B cell (primary cell): ENCODE measurements at regions of chr12 and their contacts with region 1.

Region 1: GRCh38 chr12:108618079-108618952 is 15.4 kb downstream of the SELPLG start:
- DNase-seq: peak; percentile 88
- ATAC-seq: peak; percentile 35
- H3K4me3 ChIP-seq: no peak overlapping the region
- H3K4me3 Mint-ChIP-seq: no peak overlapping the region
- H3K27ac ChIP-seq: peak overlapping the region; percentile 80 to 93
- H3K27ac Mint-ChIP-seq: peak overlapping the region; percentile 98
- H3K4me1 ChIP-seq: peaks cover 41 to 49% of the 10 kb centered on the region in 2 donors
- H3K4me1 Mint-ChIP-seq: peaks cover 69% of the 10 kb centered on the region
- H3K27me3 ChIP-seq: no peaks in the 10 kb centered on the region
- H3K27me3 Mint-ChIP-seq: no peaks in the 10 kb centered on the region
- CTCF ChIP-seq: peak; percentile 98

Region 2: DNA sequence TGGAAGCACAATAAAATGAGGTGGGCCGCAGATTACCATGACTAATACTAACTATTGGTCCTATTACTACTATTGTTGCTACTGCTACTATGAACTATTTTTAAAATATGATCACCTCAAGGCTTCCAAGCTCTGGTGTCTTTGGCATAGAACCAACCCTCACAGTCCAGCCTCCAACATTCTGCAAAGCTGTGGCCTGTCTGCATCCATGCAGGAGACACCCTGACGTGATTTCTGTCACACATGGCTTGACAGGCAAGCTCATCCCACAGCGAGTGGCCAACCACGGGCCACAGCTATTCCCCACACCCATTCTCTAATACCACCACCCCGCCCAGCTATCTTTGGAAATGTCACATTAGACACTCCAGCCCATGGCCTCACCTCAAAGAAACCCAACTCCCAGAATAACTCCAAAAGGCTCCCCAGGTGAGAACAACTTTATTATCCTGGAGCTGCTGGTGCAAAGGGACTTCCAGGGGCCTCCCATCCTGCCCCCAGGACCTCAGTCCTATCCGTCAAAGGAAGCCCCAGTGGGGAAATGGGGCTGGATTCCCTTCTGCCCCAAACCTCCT is 41.6 kb before region 1 on chr12:
- CTCF ChIA-PET with region 1: interaction called, 424 read pairs
- POLR2A ChIA-PET with region 1: interaction called, 9 read pairs
- intact Hi-C with region 1: no loop called
- DNase-seq: no peak
- ATAC-seq: no peak
- H3K4me3 ChIP-seq: no peak overlapping the region
- H3K4me3 Mint-ChIP-seq: no peak overlapping the region
- H3K27ac ChIP-seq: no peak overlapping the region
- H3K27ac Mint-ChIP-seq: no peak overlapping the region
- H3K4me1 ChIP-seq: peaks cover 21 to 27% of the 10 kb centered on the region in 2 donors
- H3K4me1 Mint-ChIP-seq: peaks cover 51% of the 10 kb centered on the region
- H3K27me3 ChIP-seq: no peaks in the 10 kb centered on the region
- H3K27me3 Mint-ChIP-seq: no peaks in the 10 kb centered on the region
- CTCF ChIP-seq: no peak

Region 3: GRCh38 chr12:108633534-108634248 is 15.4 kb after region 1 on chr12 and contains the start of gene SELPLG:
- CTCF ChIA-PET with region 1: interaction called, 431 read pairs
- POLR2A ChIA-PET with region 1: interaction called, 133 read pairs
- intact Hi-C with region 1: loop called (anchors 1 kb)
- DNase-seq: peak; percentile 98
- ATAC-seq: peak; percentile 75
- H3K4me3 ChIP-seq: peak within 1 kb of the TSS; percentile 62 to 87 (median 78)
- H3K4me3 Mint-ChIP-seq: peak within 1 kb of the TSS; percentile 99
- H3K27ac ChIP-seq: peak within 1 kb of the TSS; percentile 92 to 95
- H3K27ac Mint-ChIP-seq: peak within 1 kb of the TSS; percentile 100
- H3K4me1 ChIP-seq: peaks cover 78 to 88% of the 10 kb centered on the region in 2 donors
- H3K4me1 Mint-ChIP-seq: peaks cover 89% of the 10 kb centered on the region
- H3K27me3 ChIP-seq: no peaks in the 10 kb centered on the region
- H3K27me3 Mint-ChIP-seq: no peaks in the 10 kb centered on the region
- CTCF ChIP-seq: peak; percentile 41
- total RNA-seq, gene SELPLG: 6.1 and 6.2 TPM in 2 replicates

Region 4: DNA sequence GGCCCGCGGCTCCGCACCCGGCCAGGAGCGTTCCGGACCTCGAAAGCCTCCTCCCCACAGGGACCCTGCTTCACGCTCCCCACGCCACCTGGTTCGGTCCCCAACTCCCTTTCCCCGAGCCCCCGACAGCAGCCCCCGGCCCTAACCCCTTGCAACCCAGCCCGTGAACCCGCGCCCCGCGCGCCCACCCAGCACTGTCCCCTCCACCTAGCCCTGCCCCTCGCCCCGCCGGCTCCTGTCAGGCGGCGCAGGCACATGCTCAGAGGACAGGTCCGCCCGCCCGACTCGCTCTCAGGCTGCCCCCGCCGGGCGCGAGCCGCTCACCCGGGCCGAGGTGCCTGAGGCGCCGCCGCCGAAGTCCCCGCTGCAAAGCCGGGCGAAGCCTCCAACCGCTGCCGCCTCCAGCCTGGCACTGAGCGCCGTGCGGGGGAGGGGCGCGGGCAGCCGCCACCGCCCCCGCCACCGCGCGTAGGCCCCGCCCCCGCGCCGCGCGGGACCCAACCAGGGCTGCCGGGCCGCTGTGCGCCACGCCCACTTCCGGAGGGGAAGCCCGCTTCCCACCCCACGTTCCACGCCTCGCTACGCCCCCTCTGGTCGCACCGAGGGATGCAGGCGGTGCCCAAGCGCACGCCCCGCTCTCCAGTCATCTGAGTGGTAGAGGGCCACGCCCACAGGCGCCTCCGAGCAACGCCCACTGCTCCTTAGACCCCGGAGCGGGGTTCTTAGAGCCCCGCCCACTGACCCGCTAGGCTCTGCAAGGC is 113.0 kb after region 1 on chr12 and contains the start of gene CORO1C:
- CTCF ChIA-PET with region 1: interaction called, 5 read pairs
- POLR2A ChIA-PET with region 1: no interaction called
- intact Hi-C with region 1: loop called (anchors 5 kb)
- DNase-seq: peak; percentile 97
- ATAC-seq: peak; percentile 73
- H3K4me3 ChIP-seq: peak within 1 kb of the TSS; percentile 70 to 92 (median 86)
- H3K4me3 Mint-ChIP-seq: peak within 1 kb of the TSS; percentile 99
- H3K27ac ChIP-seq: peak within 1 kb of the TSS; percentile 80 to 92
- H3K27ac Mint-ChIP-seq: peak within 1 kb of the TSS; percentile 98
- H3K4me1 ChIP-seq: peaks cover 11 to 16% of the 10 kb centered on the region in 2 donors
- H3K4me1 Mint-ChIP-seq: peaks cover 51% of the 10 kb centered on the region
- H3K27me3 ChIP-seq: no peaks in the 10 kb centered on the region
- H3K27me3 Mint-ChIP-seq: no peaks in the 10 kb centered on the region
- CTCF ChIP-seq: peak; percentile 83
- total RNA-seq, gene CORO1C: 58.9 and 68.0 TPM in 2 replicates